ENCODE measurements at regions of chr3 and their contacts with region 1.

Region 1: GRCh38 chr3:170317954-170318353 is 39.6 kb upstream of the SKIL start:
- DNase-seq: no peak
- ATAC-seq: peak in 2 of 4 donors; percentile 47 to 67
- H3K4me3 ChIP-seq: no peak overlapping the region
- H3K27ac ChIP-seq: peak overlapping the region in 1 of 3 donors; percentile 7
- H3K4me1 ChIP-seq: no peaks in the 10 kb centered on the region
- H3K27me3 ChIP-seq: no peaks in the 10 kb centered on the region
- CTCF ChIP-seq: no peak
- POLR2A ChIP-seq: no peak

Region 2: GRCh38 chr3:170055209-170055608 is 262.7 kb before region 1 on chr3:
- intact Hi-C with region 1: no loop called
- DNase-seq: no peak
- ATAC-seq: no peak
- H3K4me3 ChIP-seq: no peak overlapping the region
- H3K27ac ChIP-seq: no peak overlapping the region
- H3K4me1 ChIP-seq: no peaks in the 10 kb centered on the region
- H3K27me3 ChIP-seq: no peaks in the 10 kb centered on the region
- CTCF ChIP-seq: no peak
- POLR2A ChIP-seq: no peak

Region 3: GRCh38 chr3:170405101-170405500 is 87.1 kb after region 1 on chr3:
- intact Hi-C with region 1: loop called in 1 of 2 experiments (anchors 10 kb)
- DNase-seq: no peak
- ATAC-seq: no peak
- H3K4me3 ChIP-seq: no peak overlapping the region
- H3K27ac ChIP-seq: no peak overlapping the region
- H3K4me1 ChIP-seq: no peaks in the 10 kb centered on the region
- H3K27me3 ChIP-seq: no peaks in the 10 kb centered on the region
- CTCF ChIP-seq: no peak
- POLR2A ChIP-seq: no peak

Region 4: GRCh38 chr3:170506556-170506955 is 188.6 kb after region 1 on chr3:
- intact Hi-C with region 1: no loop called
- DNase-seq: no peak
- ATAC-seq: peak; percentile 37 to 94 (median 64)
- H3K4me3 ChIP-seq: no peak overlapping the region
- H3K27ac ChIP-seq: no peak overlapping the region
- H3K4me1 ChIP-seq: peaks cover 0 to 9% (median 0%) of the 10 kb centered on the region in 4 donors
- H3K27me3 ChIP-seq: no peaks in the 10 kb centered on the region
- CTCF ChIP-seq: no peak
- POLR2A ChIP-seq: no peak